ENCODE measurements at regions of chr1 and their contacts with region 1.

Region 1: GRCh38 chr1:224182866-224183590 is at the start of gene DEGS1:
- DNase-seq: peak; percentile 84 to 88 (median 85)
- H3K4me3 ChIP-seq: peak within 1 kb of the TSS; percentile 79
- H3K4me3 Mint-ChIP-seq: peak within 1 kb of the TSS; percentile 90 to 97 (median 94)
- H3K27ac ChIP-seq: peak within 1 kb of the TSS; percentile 93
- H3K27ac Mint-ChIP-seq: peak within 1 kb of the TSS; percentile 91 to 99 (median 98)
- H3K4me1 ChIP-seq: peaks cover 59% of the 10 kb centered on the region
- H3K4me1 Mint-ChIP-seq: peaks cover 27 to 53% (median 40%) of the 10 kb centered on the region in 4 donors
- H3K27me3 ChIP-seq: no peaks in the 10 kb centered on the region
- H3K27me3 Mint-ChIP-seq: no peaks in the 10 kb centered on the region
- total RNA-seq, gene DEGS1: 58.5 TPM

Region 2: GRCh38 chr1:222617367-222617951 is 1565.6 kb before region 1 on chr1:
- CTCF ChIA-PET with region 1: no interaction called
- POLR2A ChIA-PET with region 1: no interaction called
- intact Hi-C with region 1: loop called (anchors 5 kb)
- DNase-seq: peak; percentile 89 to 99 (median 92)
- H3K4me3 ChIP-seq: peak overlapping the region; percentile 25 to 74
- H3K4me3 Mint-ChIP-seq: peak overlapping the region; percentile 89 to 97 (median 94)
- H3K27ac ChIP-seq: peak overlapping the region; percentile 68
- H3K27ac Mint-ChIP-seq: peak overlapping the region; percentile 90 to 98 (median 97)
- H3K4me1 ChIP-seq: peaks cover 22% of the 10 kb centered on the region
- H3K4me1 Mint-ChIP-seq: peaks cover 19 to 37% (median 28%) of the 10 kb centered on the region in 4 donors
- H3K27me3 ChIP-seq: no peaks in the 10 kb centered on the region
- H3K27me3 Mint-ChIP-seq: peaks cover 15 to 24% of the 10 kb centered on the region in 2 donors

Region 3: DNA sequence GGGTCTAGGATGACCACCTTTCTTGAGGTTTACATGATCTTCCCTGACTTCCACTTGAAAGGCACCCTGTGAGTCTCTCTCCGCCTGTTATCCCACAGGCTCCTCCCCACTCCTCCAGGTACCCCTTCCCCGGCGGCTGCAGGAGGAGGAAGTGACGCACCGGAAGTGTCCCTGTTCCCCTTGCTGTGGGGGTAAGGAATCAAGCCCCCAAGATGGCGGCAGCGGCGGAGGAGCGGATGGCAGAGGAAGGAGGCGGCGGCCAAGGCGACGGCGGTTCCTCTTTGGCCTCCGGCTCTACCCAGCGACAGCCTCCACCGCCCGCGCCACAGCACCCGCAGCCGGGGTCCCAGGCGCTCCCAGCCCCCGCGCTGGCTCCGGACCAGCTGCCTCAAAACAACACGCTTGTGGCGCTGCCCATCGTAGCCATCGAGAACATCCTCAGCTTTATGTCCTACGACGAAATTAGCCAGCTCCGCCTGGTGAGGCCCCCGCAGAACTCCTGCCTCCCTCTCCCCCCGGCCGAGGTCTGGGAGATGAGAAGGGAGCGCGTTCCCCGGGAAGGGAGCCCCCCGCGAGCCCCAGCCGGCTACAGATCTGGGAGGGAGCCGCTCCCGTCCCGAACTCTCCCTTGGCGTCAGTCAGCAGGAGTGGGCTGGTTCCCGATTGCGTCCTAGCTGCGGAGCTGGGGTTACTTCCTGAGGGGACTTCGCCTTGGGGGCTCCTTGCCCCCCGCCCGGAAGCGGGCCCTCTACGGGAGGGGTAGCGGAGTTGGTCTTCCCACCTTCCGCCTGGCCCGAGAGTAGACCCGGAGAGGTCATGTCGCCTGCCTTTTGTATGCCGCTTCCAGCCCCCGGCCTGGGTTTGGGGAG is 68.9 kb before region 1 on chr1 and contains the start of gene FBXO28:
- CTCF ChIA-PET with region 1: interaction called, 7 read pairs
- POLR2A ChIA-PET with region 1: interaction called, 9 read pairs
- intact Hi-C with region 1: loop called (anchors 2 kb)
- DNase-seq: peak; percentile 87 to 95 (median 89)
- H3K4me3 ChIP-seq: peak within 1 kb of the TSS; percentile 53 to 54
- H3K4me3 Mint-ChIP-seq: peak within 1 kb of the TSS; percentile 87 to 97 (median 94)
- H3K27ac ChIP-seq: peak within 1 kb of the TSS; percentile 97
- H3K27ac Mint-ChIP-seq: peak within 1 kb of the TSS; percentile 84 to 97 (median 95)
- H3K4me1 ChIP-seq: peaks cover 32% of the 10 kb centered on the region
- H3K4me1 Mint-ChIP-seq: peaks cover 17 to 32% (median 24%) of the 10 kb centered on the region in 4 donors
- H3K27me3 ChIP-seq: no peaks in the 10 kb centered on the region
- H3K27me3 Mint-ChIP-seq: peaks cover 0 to 2% of the 10 kb centered on the region in 2 donors
- total RNA-seq, gene FBXO28: 36.4 to 39.7 TPM

Region 4: DNA sequence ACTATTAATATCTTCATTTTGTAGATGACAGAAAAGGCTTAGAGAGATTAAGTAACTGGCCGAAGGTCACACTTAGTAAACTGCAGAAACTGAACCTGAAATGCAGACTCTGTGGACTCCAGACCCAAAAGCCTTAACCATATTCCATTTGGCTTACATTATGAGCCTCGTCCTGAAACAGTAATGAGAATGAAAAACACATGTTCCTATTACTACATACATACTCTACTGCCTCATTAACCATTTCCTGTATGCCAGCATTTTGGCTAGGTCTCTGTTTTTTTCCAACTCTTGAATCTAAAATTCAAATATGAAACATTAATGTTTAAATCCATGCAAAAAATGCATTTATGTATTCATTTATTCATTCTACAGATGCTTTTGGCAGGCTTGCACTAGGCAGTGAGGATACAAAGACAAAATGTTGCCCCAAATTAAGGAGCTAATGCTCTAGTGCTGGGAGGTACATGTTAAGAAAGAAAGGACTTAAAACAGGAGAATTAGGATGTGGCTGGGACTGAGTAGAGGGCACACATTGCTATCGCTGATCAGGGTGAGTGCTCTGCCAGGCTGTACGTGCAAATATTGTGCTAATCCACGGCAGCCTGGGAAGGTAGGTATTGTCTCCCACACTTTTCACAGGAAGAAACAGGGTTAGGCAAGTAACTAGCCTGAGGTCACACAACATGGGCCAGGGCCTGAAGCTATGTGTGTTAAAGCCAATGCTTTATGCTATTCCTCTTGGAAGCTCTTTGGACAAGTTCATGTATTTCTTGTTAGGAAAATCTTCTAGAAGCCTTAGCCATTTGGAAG is 14.0 kb after region 1 on chr1:
- CTCF ChIA-PET with region 1: interaction called, 6 read pairs
- POLR2A ChIA-PET with region 1: interaction called, 40 read pairs
- intact Hi-C with region 1: no loop called
- DNase-seq: no peak
- H3K4me3 ChIP-seq: no peak overlapping the region
- H3K4me3 Mint-ChIP-seq: no peak overlapping the region
- H3K27ac ChIP-seq: no peak overlapping the region
- H3K27ac Mint-ChIP-seq: peak overlapping the region in 4 of 7 donors; percentile 29 to 78 (median 60)
- H3K4me1 ChIP-seq: peaks cover 3% of the 10 kb centered on the region
- H3K4me1 Mint-ChIP-seq: peaks cover 4 to 10% (median 7%) of the 10 kb centered on the region in 4 donors
- H3K27me3 ChIP-seq: no peaks in the 10 kb centered on the region
- H3K27me3 Mint-ChIP-seq: no peaks in the 10 kb centered on the region

Region 5: DNA sequence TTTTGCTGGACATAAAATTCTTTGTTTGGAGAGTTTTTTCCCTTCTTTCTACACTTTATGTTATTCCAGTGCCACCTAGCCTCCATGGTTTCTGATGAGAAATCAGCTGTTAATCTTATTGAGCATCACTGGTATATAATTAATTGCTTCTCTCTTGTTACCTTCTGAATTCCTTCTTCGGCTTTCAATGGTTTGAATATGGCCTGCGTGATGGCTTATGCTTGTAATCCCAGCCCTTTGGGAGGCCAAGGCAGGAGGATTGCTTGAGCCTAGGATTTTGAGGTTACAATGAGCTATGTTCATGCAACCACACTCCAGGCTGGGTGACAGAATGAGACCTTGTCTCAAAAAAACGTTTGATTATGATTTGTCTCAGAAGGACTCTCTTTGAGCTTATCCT is 160.7 kb after region 1 on chr1:
- CTCF ChIA-PET with region 1: no interaction called
- POLR2A ChIA-PET with region 1: no interaction called
- intact Hi-C with region 1: no loop called
- DNase-seq: peak in 1 of 5 donors; percentile 12
- H3K4me3 ChIP-seq: no peak overlapping the region
- H3K4me3 Mint-ChIP-seq: peak overlapping the region in 1 of 8 donors; percentile 35
- H3K27ac ChIP-seq: no peak overlapping the region
- H3K27ac Mint-ChIP-seq: no peak overlapping the region
- H3K4me1 ChIP-seq: peaks cover 15% of the 10 kb centered on the region
- H3K4me1 Mint-ChIP-seq: peaks cover 6 to 19% (median 13%) of the 10 kb centered on the region in 4 donors
- H3K27me3 ChIP-seq: no peaks in the 10 kb centered on the region
- H3K27me3 Mint-ChIP-seq: no peaks in the 10 kb centered on the region

Region 6: DNA sequence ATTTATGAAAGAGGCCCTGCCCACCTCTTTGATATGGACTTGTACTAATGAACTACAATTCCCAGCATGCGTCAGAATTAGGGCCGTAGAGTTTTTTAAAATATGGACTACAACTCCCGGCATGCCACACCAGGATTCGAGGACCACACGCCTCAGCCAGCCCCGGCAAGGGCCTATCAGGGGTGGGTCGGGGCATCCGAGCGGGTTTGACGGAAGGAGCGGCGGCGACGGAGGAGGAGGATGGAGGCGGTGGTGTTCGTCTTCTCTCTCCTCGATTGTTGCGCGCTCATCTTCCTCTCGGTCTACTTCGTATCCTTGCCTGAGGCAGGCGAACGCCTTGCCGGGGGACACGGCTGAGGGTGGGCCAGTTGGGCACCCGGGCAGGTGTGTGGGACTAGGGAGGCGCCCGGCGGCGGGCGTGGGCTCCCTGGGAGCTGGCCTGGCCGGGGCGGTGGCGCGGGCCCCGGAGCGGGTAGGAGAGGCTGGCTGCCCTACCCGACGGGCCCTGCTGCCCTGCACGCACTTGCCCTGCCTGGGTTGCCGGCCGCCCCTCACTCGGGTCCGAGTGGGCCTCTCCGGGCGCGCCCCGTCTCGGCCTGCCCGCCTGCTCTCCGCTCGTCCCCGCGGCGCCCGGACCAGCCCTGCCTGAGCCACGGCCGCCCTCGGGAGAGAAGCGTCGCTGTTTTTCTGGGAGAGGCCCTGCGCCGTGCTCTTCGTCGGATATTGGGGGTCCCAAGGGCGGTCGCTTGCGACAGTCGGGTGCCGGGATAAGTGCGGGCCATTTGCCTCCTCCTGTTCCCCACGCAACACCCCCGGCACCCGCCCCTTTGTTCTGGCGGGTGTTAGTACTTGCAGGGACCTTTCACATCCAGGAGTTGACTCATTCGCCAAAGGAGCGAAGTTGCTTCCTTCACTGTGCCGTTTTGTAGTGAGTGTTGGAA is 173.9 kb after region 1 on chr1 and contains the start of gene CNIH4:
- CTCF ChIA-PET with region 1: no interaction called
- POLR2A ChIA-PET with region 1: interaction called, 8 read pairs
- intact Hi-C with region 1: loop called (anchors 1 kb)
- DNase-seq: peak; percentile 92 to 95 (median 94)
- H3K4me3 ChIP-seq: peak within 1 kb of the TSS; percentile 51 to 63
- H3K4me3 Mint-ChIP-seq: peak within 1 kb of the TSS; percentile 90 to 99 (median 94)
- H3K27ac ChIP-seq: peak within 1 kb of the TSS; percentile 72
- H3K27ac Mint-ChIP-seq: peak within 1 kb of the TSS; percentile 73 to 98 (median 93)
- H3K4me1 ChIP-seq: peaks cover 27% of the 10 kb centered on the region
- H3K4me1 Mint-ChIP-seq: peaks cover 26 to 54% (median 39%) of the 10 kb centered on the region in 4 donors
- H3K27me3 ChIP-seq: no peaks in the 10 kb centered on the region
- H3K27me3 Mint-ChIP-seq: no peaks in the 10 kb centered on the region
- total RNA-seq, gene CNIH4: 45.5 to 50.9 TPM

Region 7: DNA sequence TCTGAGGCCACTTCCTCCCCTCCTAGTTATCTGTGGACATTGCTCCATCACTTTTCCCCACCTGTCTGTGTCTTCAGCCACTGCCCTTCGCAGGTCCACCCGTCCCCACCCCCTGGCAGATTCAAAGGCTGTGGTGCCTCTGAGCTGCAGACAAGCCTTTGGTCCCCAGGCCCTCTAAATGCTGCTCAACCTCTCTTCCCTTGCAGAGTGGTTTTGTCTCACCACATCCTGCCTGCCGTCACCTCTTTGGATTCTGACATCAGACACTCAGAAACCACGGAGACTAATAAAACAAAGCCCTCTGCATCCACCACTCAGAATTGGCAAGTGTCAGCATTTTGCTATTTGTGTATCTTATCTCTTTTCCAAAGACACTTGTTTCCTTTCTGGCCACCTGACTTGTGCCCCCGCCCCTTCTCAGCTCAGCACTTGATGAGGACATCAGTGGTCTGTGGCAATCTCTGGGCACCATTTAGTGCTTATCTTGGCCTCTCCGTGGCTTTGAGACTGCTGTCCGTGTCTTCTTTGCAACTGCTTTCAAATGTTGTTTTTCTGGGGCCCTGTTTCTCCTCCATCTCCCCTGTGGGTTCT is 440.8 kb after region 1 on chr1:
- CTCF ChIA-PET with region 1: no interaction called
- POLR2A ChIA-PET with region 1: no interaction called
- intact Hi-C with region 1: loop called (anchors 5 kb)
- DNase-seq: peak; percentile 89 to 93 (median 91)
- H3K4me3 ChIP-seq: peak overlapping the region in 1 of 2 donors; percentile 16
- H3K4me3 Mint-ChIP-seq: peak overlapping the region; percentile 63 to 91 (median 80)
- H3K27ac ChIP-seq: peak overlapping the region; percentile 59
- H3K27ac Mint-ChIP-seq: peak overlapping the region; percentile 88 to 99 (median 98)
- H3K4me1 ChIP-seq: peaks cover 36% of the 10 kb centered on the region
- H3K4me1 Mint-ChIP-seq: peaks cover 27 to 57% (median 37%) of the 10 kb centered on the region in 4 donors
- H3K27me3 ChIP-seq: peaks cover 5% of the 10 kb centered on the region
- H3K27me3 Mint-ChIP-seq: peaks cover 15 to 26% of the 10 kb centered on the region in 2 donors